ENCODE measurements at regions of chr4 and their contacts with region 1.

Region 1: DNA sequence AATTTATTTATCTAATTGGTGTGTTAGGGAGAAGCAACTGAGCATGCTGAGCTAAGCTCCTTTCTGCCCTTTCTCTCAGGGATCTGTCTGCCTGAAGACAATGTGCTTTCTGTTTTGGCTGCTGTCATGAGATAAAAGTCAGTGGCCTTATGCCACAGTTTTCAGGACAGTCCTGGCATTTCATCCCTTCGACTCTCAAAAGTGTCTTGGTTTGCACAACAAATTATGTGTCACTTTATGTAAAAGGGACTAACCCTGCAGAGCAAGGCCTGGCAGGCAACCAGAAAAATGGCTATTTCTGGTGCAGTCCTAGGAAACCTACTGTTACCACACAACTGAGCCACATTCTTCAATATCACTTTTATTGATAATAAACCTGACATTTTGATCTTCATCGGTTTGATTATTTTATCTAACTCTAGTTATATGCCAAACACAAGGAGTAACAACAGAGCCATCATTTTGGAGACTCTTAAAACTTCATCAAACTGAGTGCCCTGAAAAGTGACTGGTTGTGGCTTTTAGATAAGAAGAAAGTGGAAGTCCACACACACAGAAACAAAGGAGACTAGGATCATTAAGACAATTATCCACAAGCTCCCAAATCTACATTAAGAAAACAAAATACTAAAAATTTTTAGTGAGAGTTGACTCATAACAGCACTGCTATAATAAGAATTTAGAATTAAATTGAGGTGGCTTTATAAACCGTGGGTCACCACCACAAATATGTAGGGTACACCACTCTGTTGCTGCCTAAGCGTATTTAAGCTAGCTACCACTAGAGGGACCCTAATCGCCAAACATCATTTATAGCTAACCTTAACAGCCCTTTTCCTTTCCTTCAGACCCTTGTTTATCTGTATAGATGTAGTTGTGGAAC is 95.9 kb upstream of the PTPN13 start:
- DNase-seq: no peak
- ATAC-seq: peak; percentile 93
- H3K4me3 ChIP-seq: no peak overlapping the region
- H3K27ac ChIP-seq: no peak overlapping the region
- H3K4me1 ChIP-seq: no peaks in the 10 kb centered on the region
- H3K27me3 ChIP-seq: no peaks in the 10 kb centered on the region
- CTCF ChIP-seq: peak; percentile 74 to 85 (median 84); a peak in 5 of 6 replicates
- EP300 ChIP-seq: no peak
- POLR2A ChIP-seq: no peak
- RAD21 ChIP-seq: peak; percentile 88

Region 2: GRCh38 chr4:86271057-86271456 is 227.2 kb before region 1 on chr4:
- CTCF ChIA-PET with region 1: no interaction called
- POLR2A ChIA-PET with region 1: no interaction called
- RAD21 ChIA-PET with region 1: no interaction called
- SMC1A ChIA-PET with region 1: no interaction called
- in situ Hi-C with region 1: no loop called
- intact Hi-C with region 1: no loop called
- DNase-seq: no peak
- ATAC-seq: peak; percentile 44; the same call in 2 of the 3 replicates
- H3K4me3 ChIP-seq: no peak overlapping the region
- H3K27ac ChIP-seq: no peak overlapping the region
- H3K4me1 ChIP-seq: no peaks in the 10 kb centered on the region
- H3K27me3 ChIP-seq: no peaks in the 10 kb centered on the region
- CTCF ChIP-seq: no peak
- EP300 ChIP-seq: no peak
- POLR2A ChIP-seq: no peak
- RAD21 ChIP-seq: no peak

Region 3: DNA sequence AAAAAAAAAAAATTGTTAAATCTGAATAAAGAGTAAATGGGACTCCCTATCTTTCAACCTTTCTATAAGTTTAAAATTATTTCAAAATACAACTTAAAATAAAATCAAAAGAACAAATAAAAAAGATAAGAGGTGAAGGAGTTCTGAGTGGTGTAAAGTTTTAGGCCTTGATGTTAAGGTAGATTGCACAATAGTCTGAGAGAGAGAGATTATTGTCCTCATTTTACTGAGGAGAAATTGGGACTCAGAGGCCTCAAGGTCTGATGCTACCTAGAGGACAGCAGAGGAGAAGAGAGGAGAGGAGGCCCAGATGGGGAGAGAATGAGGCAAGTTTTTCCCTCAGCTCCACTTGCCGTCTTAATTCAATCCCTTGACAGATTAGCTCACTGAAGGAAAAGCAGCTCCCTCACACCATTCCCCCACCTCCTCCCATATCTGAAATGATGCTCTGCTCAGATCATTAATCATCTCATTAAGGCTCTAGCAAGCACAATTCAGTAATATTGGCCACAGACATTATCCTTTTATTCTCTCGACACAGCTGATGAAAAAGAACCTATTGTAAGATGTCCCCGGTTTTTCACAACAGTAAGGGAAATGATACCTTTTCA is 10.4 kb before region 1 on chr4:
- CTCF ChIA-PET with region 1: interaction called, 36 read pairs
- POLR2A ChIA-PET with region 1: no interaction called
- RAD21 ChIA-PET with region 1: interaction called, 9 read pairs
- SMC1A ChIA-PET with region 1: interaction called, 42 read pairs
- in situ Hi-C with region 1: no loop called
- intact Hi-C with region 1: no loop called
- DNase-seq: no peak
- ATAC-seq: no peak
- H3K4me3 ChIP-seq: no peak overlapping the region
- H3K27ac ChIP-seq: no peak overlapping the region
- H3K4me1 ChIP-seq: no peaks in the 10 kb centered on the region
- H3K27me3 ChIP-seq: no peaks in the 10 kb centered on the region
- CTCF ChIP-seq: no peak
- EP300 ChIP-seq: no peak
- POLR2A ChIP-seq: no peak
- RAD21 ChIP-seq: no peak

Region 4: DNA sequence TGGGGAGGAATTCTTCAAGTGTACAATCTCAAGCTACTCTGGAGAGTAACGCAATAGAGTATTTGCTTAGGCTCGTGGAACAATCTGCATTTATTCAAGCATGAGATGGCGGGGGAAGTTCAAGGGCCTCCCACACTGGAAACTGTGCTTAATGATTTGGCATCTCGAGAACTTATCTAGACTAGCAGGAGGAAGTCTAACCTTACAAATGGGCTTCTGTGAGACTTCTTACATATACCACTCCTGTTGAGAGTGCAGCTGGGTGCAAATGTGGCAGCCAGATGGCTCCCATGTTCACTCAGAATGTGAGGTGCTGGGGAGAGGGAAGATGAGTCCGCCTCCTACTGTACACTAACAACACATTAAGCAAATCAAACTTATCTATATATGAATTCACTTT is 66.6 kb after region 1 on chr4:
- CTCF ChIA-PET with region 1: interaction called, 58 read pairs
- POLR2A ChIA-PET with region 1: interaction called, 6 read pairs
- RAD21 ChIA-PET with region 1: interaction called, 71 read pairs
- SMC1A ChIA-PET with region 1: interaction called, 49 read pairs
- in situ Hi-C with region 1: no loop called
- intact Hi-C with region 1: no loop called
- DNase-seq: no peak
- ATAC-seq: peak; percentile 52
- H3K4me3 ChIP-seq: no peak overlapping the region
- H3K27ac ChIP-seq: no peak overlapping the region
- H3K4me1 ChIP-seq: no peaks in the 10 kb centered on the region; the same call in 1 of the 2 replicates
- H3K27me3 ChIP-seq: no peaks in the 10 kb centered on the region
- CTCF ChIP-seq: peak in 1 of 3 experiments; percentile 50; a peak in 2 of 6 replicates
- EP300 ChIP-seq: no peak
- POLR2A ChIP-seq: no peak
- RAD21 ChIP-seq: peak; percentile 56; the same call in 1 of the 2 replicates

Region 5: DNA sequence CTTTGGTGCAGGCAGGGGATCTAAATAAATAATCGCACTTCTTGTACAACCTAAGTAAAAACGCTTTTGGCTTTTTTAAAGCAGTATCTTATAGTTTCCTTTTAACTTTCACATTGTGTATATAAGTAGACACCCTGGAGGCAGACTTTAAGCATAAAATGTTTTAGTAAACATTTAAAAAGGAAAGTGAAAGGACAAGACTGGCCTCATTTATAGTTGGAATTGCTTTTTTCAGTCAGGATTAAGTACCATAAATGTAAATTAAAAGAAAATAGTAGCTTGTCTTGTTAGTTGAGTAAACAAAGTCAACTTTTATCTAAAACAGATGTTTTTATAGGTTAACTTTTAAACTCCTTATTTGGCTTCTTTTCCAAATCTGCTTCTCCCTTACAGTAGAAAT is 135.6 kb after region 1 on chr4:
- CTCF ChIA-PET with region 1: interaction called, 7 read pairs
- POLR2A ChIA-PET with region 1: interaction called, 4 read pairs
- RAD21 ChIA-PET with region 1: interaction called, 4 read pairs
- SMC1A ChIA-PET with region 1: interaction called, 13 read pairs
- in situ Hi-C with region 1: no loop called
- intact Hi-C with region 1: no loop called
- DNase-seq: no peak
- ATAC-seq: 0 out of 3 replicates have a peak, but pooled peaks have one; percentile 16
- H3K4me3 ChIP-seq: no peak overlapping the region
- H3K27ac ChIP-seq: no peak overlapping the region
- H3K4me1 ChIP-seq: no peaks in the 10 kb centered on the region
- H3K27me3 ChIP-seq: no peaks in the 10 kb centered on the region
- CTCF ChIP-seq: no peak
- EP300 ChIP-seq: no peak
- POLR2A ChIP-seq: no peak
- RAD21 ChIP-seq: no peak

Region 6: DNA sequence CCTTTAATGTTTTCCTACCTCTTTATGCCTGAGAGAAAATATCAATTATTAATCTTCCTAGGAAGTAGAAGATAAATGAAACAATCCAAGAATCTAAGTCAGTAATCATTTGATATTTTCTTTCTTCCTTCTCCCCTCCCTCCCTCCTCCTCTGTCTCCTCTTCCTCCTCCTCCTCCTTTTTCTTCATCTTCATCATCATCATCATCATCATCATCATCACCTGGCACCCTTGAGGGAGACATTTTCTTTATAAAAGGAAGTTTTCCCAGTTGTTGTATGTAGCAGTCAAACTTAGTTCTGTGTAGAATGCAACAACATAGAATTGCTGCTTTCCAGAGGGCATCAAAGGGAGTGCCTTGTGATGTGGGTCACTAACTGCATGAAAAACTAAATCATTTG is 250.9 kb after region 1 on chr4:
- CTCF ChIA-PET with region 1: interaction called, 10 read pairs
- POLR2A ChIA-PET with region 1: no interaction called
- RAD21 ChIA-PET with region 1: interaction called, 4 read pairs
- SMC1A ChIA-PET with region 1: interaction called, 16 read pairs
- in situ Hi-C with region 1: no loop called
- intact Hi-C with region 1: no loop called
- DNase-seq: no peak
- ATAC-seq: no peak
- H3K4me3 ChIP-seq: no peak overlapping the region
- H3K27ac ChIP-seq: no peak overlapping the region
- H3K4me1 ChIP-seq: no peaks in the 10 kb centered on the region
- H3K27me3 ChIP-seq: no peaks in the 10 kb centered on the region
- CTCF ChIP-seq: no peak
- EP300 ChIP-seq: no peak
- POLR2A ChIP-seq: no peak
- RAD21 ChIP-seq: no peak

Region 7: DNA sequence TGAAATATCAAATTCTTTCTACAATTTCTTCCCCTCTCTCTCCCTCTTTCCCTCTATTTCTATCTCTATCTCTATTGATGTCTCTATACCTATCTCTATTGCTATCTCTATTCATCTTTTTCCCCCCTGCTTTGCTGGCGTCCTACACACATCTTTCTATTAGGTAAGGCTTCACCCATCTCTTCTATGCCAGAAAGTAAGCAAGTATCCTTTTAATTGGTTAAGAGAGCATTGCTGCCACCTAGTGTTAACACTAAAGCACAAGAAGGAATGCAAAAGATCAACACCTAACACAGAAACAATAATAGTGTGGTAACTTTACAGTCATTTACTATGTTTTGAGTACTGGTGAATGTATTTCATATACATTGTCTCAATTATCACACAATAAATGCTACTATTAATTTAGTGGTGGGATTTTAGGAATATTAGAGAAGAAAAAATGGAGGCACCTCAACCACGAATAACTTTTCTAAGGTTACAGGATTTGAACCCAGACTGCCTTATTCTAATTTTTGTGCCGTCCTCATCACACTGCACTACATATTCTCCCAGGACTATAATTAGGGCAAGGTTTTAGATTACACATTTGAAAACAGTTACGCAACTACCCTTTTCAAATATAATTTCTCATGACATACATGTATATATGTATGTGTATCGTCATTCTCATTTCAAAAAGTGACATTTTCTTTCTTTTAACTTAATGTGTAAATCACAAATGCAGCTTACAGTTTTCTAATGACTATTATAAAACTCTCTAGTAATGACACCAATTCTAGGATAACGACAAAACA is 397.7 kb after region 1 on chr4:
- CTCF ChIA-PET with region 1: interaction called, 307 read pairs
- POLR2A ChIA-PET with region 1: interaction called, 3 read pairs
- RAD21 ChIA-PET with region 1: interaction called, 79 read pairs
- SMC1A ChIA-PET with region 1: interaction called, 190 read pairs
- in situ Hi-C with region 1: loop called (anchors 5 kb)
- intact Hi-C with region 1: loop called (anchors 1 kb)
- DNase-seq: no peak
- ATAC-seq: peak; percentile 65
- H3K4me3 ChIP-seq: no peak overlapping the region
- H3K27ac ChIP-seq: no peak overlapping the region
- H3K4me1 ChIP-seq: no peaks in the 10 kb centered on the region
- H3K27me3 ChIP-seq: no peaks in the 10 kb centered on the region
- CTCF ChIP-seq: peak; percentile 52 to 80 (median 66)
- EP300 ChIP-seq: no peak
- POLR2A ChIP-seq: no peak
- RAD21 ChIP-seq: peak; percentile 97

Region 8: GRCh38 chr4:86961605-86962295 is 463.5 kb after region 1 on chr4:
- CTCF ChIA-PET with region 1: no interaction called
- POLR2A ChIA-PET with region 1: no interaction called
- RAD21 ChIA-PET with region 1: no interaction called
- SMC1A ChIA-PET with region 1: no interaction called
- in situ Hi-C with region 1: no loop called
- intact Hi-C with region 1: no loop called
- DNase-seq: peak; percentile 85
- ATAC-seq: peak; percentile 92
- H3K4me3 ChIP-seq: peak overlapping the region; percentile 61; the same call in 1 of the 2 replicates
- H3K27ac ChIP-seq: peak overlapping the region; percentile 80
- H3K4me1 ChIP-seq: peaks cover 70% of the 10 kb centered on the region
- H3K27me3 ChIP-seq: no peaks in the 10 kb centered on the region
- CTCF ChIP-seq: no peak
- EP300 ChIP-seq: peak; percentile 79 to 84; a peak in 3 of 4 replicates
- POLR2A ChIP-seq: peak; percentile 63
- RAD21 ChIP-seq: no peak

Region 9: GRCh38 chr4:87235020-87235671 is 736.9 kb after region 1 on chr4:
- CTCF ChIA-PET with region 1: interaction called, 6 read pairs
- POLR2A ChIA-PET with region 1: no interaction called
- RAD21 ChIA-PET with region 1: interaction called, 4 read pairs
- SMC1A ChIA-PET with region 1: interaction called, 7 read pairs
- in situ Hi-C with region 1: loop called (anchors 10 kb)
- intact Hi-C with region 1: loop called (anchors 5 kb)
- DNase-seq: no peak
- ATAC-seq: peak; percentile 32; the same call in 2 of the 3 replicates
- H3K4me3 ChIP-seq: peak overlapping the region; percentile 66; the same call in 1 of the 2 replicates
- H3K27ac ChIP-seq: no peak overlapping the region
- H3K4me1 ChIP-seq: no peaks in the 10 kb centered on the region; the same call in 1 of the 2 replicates
- H3K27me3 ChIP-seq: no peaks in the 10 kb centered on the region
- CTCF ChIP-seq: no peak
- EP300 ChIP-seq: no peak
- POLR2A ChIP-seq: no peak
- RAD21 ChIP-seq: no peak